Psoas muscle (tissue), 8 donors: ENCODE measurements at regions of chr17 and their contacts with region 1.

Region 1: GRCh38 chr17:41322094-41322902 is 6.8 kb upstream of the KRTAP17-1 start:
- DNase-seq: no peak
- ATAC-seq: no peak
- H3K4me3 ChIP-seq: no peak overlapping the region
- H3K27ac ChIP-seq: no peak overlapping the region
- H3K4me1 ChIP-seq: no peaks in the 10 kb centered on the region
- H3K27me3 ChIP-seq: no peaks in the 10 kb centered on the region
- CTCF ChIP-seq: peak; percentile 54

Region 2: GRCh38 chr17:40803617-40804082 is 518.6 kb before region 1 on chr17:
- intact Hi-C with region 1: loop called in 1 of 2 experiments (anchors 10 kb)
- DNase-seq: peak; percentile 62 to 76
- ATAC-seq: peak; percentile 69 to 86 (median 78)
- H3K4me3 ChIP-seq: no peak overlapping the region
- H3K27ac ChIP-seq: no peak overlapping the region
- H3K4me1 ChIP-seq: no peaks in the 10 kb centered on the region
- H3K27me3 ChIP-seq: peaks cover 0 to 65% (median 2%) of the 10 kb centered on the region in 3 donors
- CTCF ChIP-seq: peak; percentile 83

Region 3: GRCh38 chr17:40909351-40909750 is 412.9 kb before region 1 on chr17:
- intact Hi-C with region 1: loop called (anchors 2 to 10 kb)
- DNase-seq: peak; percentile 56 to 85
- ATAC-seq: peak; percentile 96 to 98 (median 96)
- H3K4me3 ChIP-seq: no peak overlapping the region
- H3K27ac ChIP-seq: no peak overlapping the region
- H3K4me1 ChIP-seq: peaks cover 17% of the 10 kb centered on the region
- H3K27me3 ChIP-seq: peaks cover 0 to 22% (median 2%) of the 10 kb centered on the region in 3 donors
- CTCF ChIP-seq: peak; percentile 80

Region 4: DNA sequence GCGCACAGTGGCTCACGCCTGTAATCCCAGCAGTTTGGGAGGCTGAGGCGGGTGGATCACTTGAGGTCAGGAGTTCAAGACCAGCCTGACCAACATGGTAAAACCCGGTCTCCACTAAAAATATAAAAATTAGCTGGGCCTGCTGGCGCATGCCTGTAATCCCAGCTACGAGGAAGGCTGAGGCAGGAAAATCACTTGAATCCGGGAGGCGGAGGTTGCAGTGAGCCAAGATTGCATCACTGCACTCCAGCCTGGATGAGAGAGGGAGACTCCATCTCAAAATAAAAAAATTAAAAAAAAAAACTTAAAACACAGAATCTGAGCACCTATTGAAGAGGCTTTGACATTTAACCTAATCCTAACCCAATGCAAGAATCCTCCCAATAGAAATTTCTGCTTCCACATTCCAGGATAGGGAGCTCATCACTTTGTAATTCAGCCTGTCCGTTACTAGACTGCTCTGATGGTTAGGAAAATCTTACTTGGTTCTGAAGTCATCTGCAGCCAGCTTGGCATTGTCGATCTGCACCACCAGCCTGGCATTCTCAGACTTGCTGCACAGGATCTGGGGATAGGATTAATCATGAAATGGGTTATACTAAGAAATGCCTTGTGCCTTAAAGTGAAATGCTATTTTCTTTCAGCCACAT is 45.3 kb after region 1 on chr17:
- intact Hi-C with region 1: no loop called
- DNase-seq: no peak
- ATAC-seq: no peak
- H3K4me3 ChIP-seq: no peak overlapping the region
- H3K27ac ChIP-seq: no peak overlapping the region
- H3K4me1 ChIP-seq: no peaks in the 10 kb centered on the region
- H3K27me3 ChIP-seq: peaks cover 0 to 2% (median 0%) of the 10 kb centered on the region in 3 donors
- CTCF ChIP-seq: no peak